Gastrocnemius medialis (tissue), 4 donors: ENCODE measurements at regions of chr2 and their contacts with region 1.

Region 1: DNA sequence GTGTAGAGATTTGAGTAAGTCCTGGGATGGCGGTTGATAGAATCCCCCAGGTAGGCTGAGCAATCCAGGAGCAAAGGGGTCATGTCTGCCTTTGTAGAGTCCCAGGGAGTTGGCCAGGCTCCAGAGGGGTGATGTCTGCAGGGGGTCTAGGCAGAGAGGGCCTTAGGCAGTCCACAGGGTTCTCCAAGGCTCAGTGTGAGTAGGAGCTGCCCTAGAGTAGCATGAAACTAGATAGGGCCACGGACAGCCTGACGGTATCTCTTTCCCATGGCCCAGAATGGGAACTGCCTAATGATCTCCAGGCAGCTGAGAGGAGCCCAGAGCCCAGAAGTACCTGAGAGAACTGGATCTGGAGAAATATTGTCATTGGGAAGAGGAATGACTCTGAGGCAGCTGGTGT is 9.0 kb upstream of the FAM136A start:
- DNase-seq: no peak
- ATAC-seq: peak in 1 of 2 donors; percentile 51
- H3K4me3 ChIP-seq: no peak overlapping the region
- H3K27ac ChIP-seq: no peak overlapping the region
- H3K4me1 ChIP-seq: no peaks in the 10 kb centered on the region
- H3K27me3 ChIP-seq: no peaks in the 10 kb centered on the region
- CTCF ChIP-seq: no peak
- POLR2A ChIP-seq: no peak

Region 2: DNA sequence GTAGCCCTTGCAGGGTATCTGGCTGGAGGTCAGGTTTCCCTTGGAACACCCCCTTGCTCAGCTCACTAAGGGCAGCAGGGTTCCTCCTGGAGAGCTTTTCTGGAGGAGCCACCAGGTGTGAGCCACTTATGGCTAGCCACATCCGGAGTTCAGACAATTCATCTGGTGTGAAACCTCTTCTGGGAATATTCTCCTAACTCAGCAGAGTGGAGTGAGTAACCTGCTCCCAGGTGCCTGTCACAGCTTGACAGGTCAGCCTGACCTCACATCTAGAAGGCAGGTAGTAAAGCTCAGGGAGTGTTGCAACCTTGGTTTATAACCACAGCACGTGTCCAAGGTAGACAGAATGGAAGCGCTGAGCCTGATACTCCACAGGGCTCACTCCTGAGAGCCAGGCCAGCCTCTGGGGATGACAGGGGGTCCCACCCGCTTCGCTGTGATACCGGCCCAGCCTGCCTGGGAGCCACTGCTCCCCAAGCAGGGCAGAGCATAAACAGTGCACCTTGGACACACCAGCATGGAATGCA is 305.3 kb after region 1 on chr2:
- in situ Hi-C with region 1: loop called in 1 of 4 experiments (anchors 10 kb)
- intact Hi-C with region 1: no loop called
- DNase-seq: no peak
- ATAC-seq: no peak
- H3K4me3 ChIP-seq: no peak overlapping the region
- H3K27ac ChIP-seq: no peak overlapping the region
- H3K4me1 ChIP-seq: no peaks in the 10 kb centered on the region
- H3K27me3 ChIP-seq: no peaks in the 10 kb centered on the region
- CTCF ChIP-seq: no peak
- POLR2A ChIP-seq: no peak